K562 (cell line): ENCODE measurements at regions of chr18 and their contacts with region 1.

Region 1: DNA sequence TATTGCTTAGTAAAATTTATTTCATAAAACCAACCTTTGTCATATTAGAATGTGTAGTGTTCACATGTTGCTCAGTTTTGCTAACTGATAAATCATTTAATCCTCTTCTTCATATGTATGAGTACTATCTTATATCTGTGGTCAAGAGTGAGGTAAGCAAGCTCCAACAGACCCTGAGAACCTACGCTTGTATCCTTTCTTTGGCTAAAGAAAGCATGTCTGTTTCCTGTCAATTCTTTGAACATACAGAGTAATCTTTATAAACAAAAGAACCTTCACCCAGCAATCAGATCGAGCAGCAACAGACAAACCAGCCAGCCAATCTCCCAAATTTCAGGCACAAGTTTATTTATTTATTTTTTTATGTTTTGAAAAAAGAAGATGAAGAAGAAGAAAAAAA is 6.4 kb downstream of the ADCYAP1 start:
- DNase-seq: no peak
- ATAC-seq: no peak
- H3K4me3 ChIP-seq: no peak overlapping the region
- H3K27ac ChIP-seq: no peak overlapping the region
- H3K4me1 ChIP-seq: peaks cover 0 to 30% of the 10 kb centered on the region in 2 experiments; a peak in 3 of 5 replicates
- H3K27me3 ChIP-seq: peaks cover 34 to 48% of the 10 kb centered on the region in 2 experiments; a peak in 4 of 5 replicates
- CTCF ChIP-seq: no peak
- EP300 ChIP-seq: no peak
- POLR2A ChIP-seq: no peak
- RAD21 ChIP-seq: no peak

Region 2: DNA sequence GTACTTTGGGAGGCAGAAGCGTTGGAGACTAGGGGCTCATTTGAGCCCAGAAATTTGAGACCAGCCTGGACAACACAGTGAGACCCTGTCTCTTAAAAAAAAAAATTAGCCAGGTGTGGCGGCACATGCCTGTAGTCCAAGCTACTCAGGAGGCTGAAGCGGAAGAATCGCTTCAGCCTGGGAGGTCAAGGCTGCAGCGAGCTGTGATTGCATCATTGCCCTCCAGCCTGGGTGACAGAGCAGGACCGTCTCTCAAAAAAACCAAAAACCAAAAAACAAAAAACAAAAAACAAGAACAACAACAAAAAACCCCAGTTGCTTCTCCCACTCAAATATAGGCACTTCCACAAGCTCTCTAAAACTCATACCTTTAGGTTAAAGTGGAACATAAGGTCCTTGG is 33.8 kb before region 1 on chr18:
- CTCF ChIA-PET with region 1: no interaction called
- POLR2A ChIA-PET with region 1: no interaction called
- in situ Hi-C with region 1: no loop called
- intact Hi-C with region 1: loop called (anchors 5 kb)
- DNase-seq: no peak
- ATAC-seq: peak; percentile 58; the same call in 2 of the 3 replicates
- H3K4me3 ChIP-seq: no peak overlapping the region
- H3K27ac ChIP-seq: no peak overlapping the region
- H3K4me1 ChIP-seq: no peaks in the 10 kb centered on the region
- H3K27me3 ChIP-seq: peaks cover 4 to 7% of the 10 kb centered on the region in 2 experiments; a peak in 4 of 5 replicates
- CTCF ChIP-seq: no peak
- EP300 ChIP-seq: no peak
- POLR2A ChIP-seq: no peak
- RAD21 ChIP-seq: no peak

Region 3: DNA sequence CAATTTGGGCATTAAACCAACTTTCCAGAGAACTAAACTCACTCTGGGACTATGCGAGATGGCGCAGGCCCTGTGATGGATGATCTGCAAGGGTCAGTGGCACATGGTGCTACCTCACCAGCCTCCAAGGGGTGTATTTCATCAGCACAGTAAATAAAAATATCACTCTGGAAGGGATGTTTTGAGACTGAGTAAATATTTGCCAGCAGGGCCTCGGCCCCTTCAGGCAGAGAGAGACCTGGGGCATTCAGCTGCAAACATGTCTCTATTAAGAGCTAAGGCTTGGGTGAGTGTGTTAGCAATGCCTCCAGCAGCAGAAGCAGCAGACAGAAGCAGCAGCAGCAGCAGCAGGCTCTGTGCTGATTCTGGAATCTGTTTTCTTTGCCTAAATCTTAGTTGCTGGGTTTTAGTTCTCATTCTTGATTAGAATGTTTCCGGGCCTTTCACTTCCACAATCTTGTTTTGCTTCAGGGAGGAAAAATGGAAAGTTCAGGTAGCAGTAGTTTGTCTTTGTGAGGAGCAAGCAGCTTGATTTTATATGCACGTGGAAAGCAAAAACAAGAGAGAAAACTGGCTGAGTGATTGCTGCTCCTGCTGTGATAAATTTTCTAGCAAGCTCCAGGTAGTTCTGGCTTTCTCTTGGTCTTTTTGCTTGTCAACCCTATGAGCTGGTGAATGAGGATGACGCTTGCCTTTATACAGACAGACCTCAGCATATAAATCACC is 12.3 kb after region 1 on chr18:
- CTCF ChIA-PET with region 1: no interaction called
- POLR2A ChIA-PET with region 1: interaction called, 11 read pairs
- in situ Hi-C with region 1: no loop called
- intact Hi-C with region 1: no loop called
- DNase-seq: no peak
- ATAC-seq: no peak
- H3K4me3 ChIP-seq: no peak overlapping the region
- H3K27ac ChIP-seq: no peak overlapping the region
- H3K4me1 ChIP-seq: no peaks in the 10 kb centered on the region
- H3K27me3 ChIP-seq: peaks cover 8 to 19% of the 10 kb centered on the region in 2 experiments
- CTCF ChIP-seq: no peak
- EP300 ChIP-seq: no peak
- POLR2A ChIP-seq: no peak
- RAD21 ChIP-seq: no peak